ENCODE measurements at regions of chr3 and their contacts with region 1.

Region 1: GRCh38 chr3:107660306-107660976 is 137.7 kb downstream of the BBX start:
- DNase-seq: no peak
- H3K4me3 Mint-ChIP-seq: no peak overlapping the region
- H3K27ac Mint-ChIP-seq: no peak overlapping the region
- H3K4me1 Mint-ChIP-seq: peaks cover 23% of the 10 kb centered on the region
- H3K27me3 Mint-ChIP-seq: no peaks in the 10 kb centered on the region

Region 2: DNA sequence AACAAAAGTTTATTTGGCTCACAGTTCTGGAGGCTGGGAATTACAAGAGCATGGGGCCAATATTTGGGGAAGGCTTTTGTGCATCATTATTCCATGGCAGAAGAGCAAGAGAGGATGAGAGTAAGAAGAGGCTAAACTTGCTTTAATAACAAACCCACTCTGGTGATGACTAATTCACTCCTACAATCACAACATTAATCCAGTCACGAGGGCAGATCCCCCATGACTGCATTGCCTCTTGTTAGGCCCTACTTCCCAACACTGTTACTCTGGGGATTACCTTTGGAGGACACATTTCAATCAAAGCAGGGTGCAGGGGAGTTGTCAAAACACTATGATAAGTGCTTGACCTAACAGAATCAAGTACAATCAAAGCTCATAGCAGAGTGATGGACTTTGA is 44.0 kb after region 1 on chr3:
- CTCF ChIA-PET with region 1: no interaction called
- POLR2A ChIA-PET with region 1: no interaction called
- intact Hi-C with region 1: no loop called
- DNase-seq: no peak
- H3K4me3 Mint-ChIP-seq: no peak overlapping the region
- H3K27ac Mint-ChIP-seq: no peak overlapping the region
- H3K4me1 Mint-ChIP-seq: peaks cover 30% of the 10 kb centered on the region
- H3K27me3 Mint-ChIP-seq: no peaks in the 10 kb centered on the region

Region 3: DNA sequence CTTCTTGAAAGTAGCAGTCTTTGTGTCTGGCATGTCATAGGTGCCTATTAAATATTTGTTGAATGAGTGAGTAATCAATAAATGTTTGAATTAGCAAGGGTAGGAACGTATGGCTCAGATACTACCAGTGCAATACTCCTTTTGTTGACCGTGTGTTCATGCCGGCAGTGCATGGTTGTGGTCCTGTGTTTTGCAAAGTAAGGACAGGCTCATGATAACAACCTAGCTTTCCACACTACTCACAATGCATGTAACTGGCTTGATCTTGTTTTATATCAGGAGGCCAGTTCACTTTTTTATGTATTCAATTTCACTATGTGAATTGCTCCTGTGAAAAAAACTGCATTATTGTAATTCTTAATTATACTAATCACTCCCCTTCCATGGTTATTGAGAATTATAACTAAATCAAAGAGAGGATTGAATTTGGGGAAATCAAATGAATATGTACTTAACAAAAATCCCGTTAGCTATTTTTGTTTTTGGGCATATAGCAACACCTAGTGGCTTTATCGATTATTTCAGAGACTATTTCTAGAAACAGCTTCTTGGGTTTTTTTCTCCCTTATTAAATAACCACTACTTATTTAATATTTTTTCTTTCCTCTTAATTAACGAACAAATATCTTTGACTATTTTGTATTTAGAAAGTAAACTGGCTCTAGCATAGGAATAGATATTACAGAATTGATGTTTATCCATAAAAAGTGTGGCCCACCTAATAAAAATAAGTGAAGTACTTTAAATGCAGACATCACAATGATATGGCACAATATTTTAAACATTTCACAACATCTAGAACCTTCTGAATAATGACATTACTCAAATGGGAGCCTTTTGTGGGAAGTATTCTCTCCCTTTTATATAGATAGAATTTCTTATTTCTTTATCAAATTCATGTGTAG is 80.8 kb after region 1 on chr3:
- CTCF ChIA-PET with region 1: interaction called, 34 read pairs
- POLR2A ChIA-PET with region 1: no interaction called
- intact Hi-C with region 1: no loop called
- DNase-seq: no peak
- H3K4me3 Mint-ChIP-seq: no peak overlapping the region
- H3K27ac Mint-ChIP-seq: no peak overlapping the region
- H3K4me1 Mint-ChIP-seq: no peaks in the 10 kb centered on the region
- H3K27me3 Mint-ChIP-seq: no peaks in the 10 kb centered on the region

Region 4: GRCh38 chr3:107846279-107846852 is 185.9 kb after region 1 on chr3:
- CTCF ChIA-PET with region 1: interaction called, 5 read pairs
- POLR2A ChIA-PET with region 1: no interaction called
- intact Hi-C with region 1: loop called (anchors 5 kb)
- DNase-seq: peak; percentile 60
- H3K4me3 Mint-ChIP-seq: no peak overlapping the region
- H3K27ac Mint-ChIP-seq: no peak overlapping the region
- H3K4me1 Mint-ChIP-seq: no peaks in the 10 kb centered on the region
- H3K27me3 Mint-ChIP-seq: no peaks in the 10 kb centered on the region

Region 5: GRCh38 chr3:108073764-108074431 is 413.5 kb after region 1 on chr3:
- CTCF ChIA-PET with region 1: no interaction called
- POLR2A ChIA-PET with region 1: no interaction called
- intact Hi-C with region 1: no loop called
- DNase-seq: no peak
- H3K4me3 Mint-ChIP-seq: no peak overlapping the region
- H3K27ac Mint-ChIP-seq: peak overlapping the region; percentile 50
- H3K4me1 Mint-ChIP-seq: peaks cover 73% of the 10 kb centered on the region
- H3K27me3 Mint-ChIP-seq: no peaks in the 10 kb centered on the region

Measured in activated CD4-positive, alpha-beta memory T cell treated with anti-CD3 and anti-CD28 coated beads for 36 hours (primary cell).